ENCODE measurements at regions of chr12 and their contacts with region 1.

Region 1: GRCh38 chr12:45990468-45991283 is at the start of gene SCAF11:
- DNase-seq: peak; percentile 100
- H3K4me3 ChIP-seq: peak within 1 kb of the TSS; percentile 56 to 91 (median 86)
- H3K27ac ChIP-seq: peak within 1 kb of the TSS; percentile 79
- H3K4me1 ChIP-seq: peaks cover 16% of the 10 kb centered on the region
- H3K27me3 ChIP-seq: no peaks in the 10 kb centered on the region
- CTCF ChIP-seq: peak; percentile 96 to 99
- POLR2A ChIP-seq: peak; percentile 16
- total RNA-seq, gene SCAF11: 95.0 and 109 TPM in 2 replicates

Region 2: GRCh38 chr12:45130881-45131281 is 859.8 kb before region 1 on chr12:
- CTCF ChIA-PET with region 1: no interaction called
- POLR2A ChIA-PET with region 1: no interaction called
- dilution Hi-C with region 1: no loop called
- intact Hi-C with region 1: loop called (anchors 5 kb)
- DNase-seq: peak; percentile 71
- H3K4me3 ChIP-seq: no peak overlapping the region
- H3K27ac ChIP-seq: no peak overlapping the region
- H3K4me1 ChIP-seq: no peaks in the 10 kb centered on the region
- H3K27me3 ChIP-seq: peaks cover 5 to 22% of the 10 kb centered on the region in 2 experiments
- CTCF ChIP-seq: peak; percentile 52 to 61
- POLR2A ChIP-seq: no peak

Region 3: GRCh38 chr12:45762185-45763110 is 228.2 kb before region 1 on chr12:
- CTCF ChIA-PET with region 1: interaction called, 18 read pairs
- POLR2A ChIA-PET with region 1: no interaction called
- dilution Hi-C with region 1: no loop called
- intact Hi-C with region 1: loop called (anchors 5 kb)
- DNase-seq: peak; percentile 70
- H3K4me3 ChIP-seq: no peak overlapping the region
- H3K27ac ChIP-seq: no peak overlapping the region
- H3K4me1 ChIP-seq: no peaks in the 10 kb centered on the region
- H3K27me3 ChIP-seq: no peaks in the 10 kb centered on the region
- CTCF ChIP-seq: peak; percentile 47 to 56
- POLR2A ChIP-seq: no peak

Region 4: DNA sequence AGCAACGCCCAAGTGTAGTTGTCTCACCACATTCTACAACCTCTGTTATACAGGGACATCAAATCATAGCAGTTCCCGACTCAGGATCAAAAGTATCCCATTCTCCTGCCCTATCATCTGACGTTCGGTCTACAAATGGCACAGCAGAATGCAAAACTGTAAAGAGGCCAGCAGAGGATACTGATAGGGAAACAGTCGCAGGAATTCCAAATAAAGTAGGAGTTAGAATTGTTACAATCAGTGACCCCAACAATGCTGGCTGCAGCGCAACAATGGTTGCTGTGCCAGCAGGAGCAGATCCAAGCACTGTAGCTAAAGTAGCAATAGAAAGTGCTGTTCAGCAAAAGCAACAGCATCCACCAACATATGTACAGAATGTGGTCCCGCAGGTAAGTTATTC is 138.2 kb before region 1 on chr12:
- CTCF ChIA-PET with region 1: no interaction called
- POLR2A ChIA-PET with region 1: no interaction called
- dilution Hi-C with region 1: no loop called
- intact Hi-C with region 1: no loop called
- DNase-seq: no peak
- H3K4me3 ChIP-seq: no peak overlapping the region
- H3K27ac ChIP-seq: no peak overlapping the region
- H3K4me1 ChIP-seq: no peaks in the 10 kb centered on the region
- H3K27me3 ChIP-seq: no peaks in the 10 kb centered on the region
- CTCF ChIP-seq: no peak
- POLR2A ChIP-seq: no peak

Region 5: GRCh38 chr12:45973526-45973925 is 17.1 kb before region 1 on chr12:
- CTCF ChIA-PET with region 1: interaction called, 4 read pairs
- POLR2A ChIA-PET with region 1: no interaction called
- dilution Hi-C with region 1: no loop called
- intact Hi-C with region 1: loop called (anchors 2 kb)
- DNase-seq: peak; percentile 80
- H3K4me3 ChIP-seq: no peak overlapping the region
- H3K27ac ChIP-seq: peak overlapping the region; percentile 15
- H3K4me1 ChIP-seq: peaks cover 11% of the 10 kb centered on the region
- H3K27me3 ChIP-seq: no peaks in the 10 kb centered on the region
- CTCF ChIP-seq: no peak
- POLR2A ChIP-seq: no peak

Region 6: GRCh38 chr12:46027172-46027571 is 36.5 kb after region 1 on chr12:
- CTCF ChIA-PET with region 1: no interaction called
- POLR2A ChIA-PET with region 1: no interaction called
- dilution Hi-C with region 1: no loop called
- intact Hi-C with region 1: no loop called
- DNase-seq: no peak
- H3K4me3 ChIP-seq: no peak overlapping the region
- H3K27ac ChIP-seq: no peak overlapping the region
- H3K4me1 ChIP-seq: no peaks in the 10 kb centered on the region
- H3K27me3 ChIP-seq: peaks cover 6 to 12% of the 10 kb centered on the region in 2 experiments
- CTCF ChIP-seq: no peak
- POLR2A ChIP-seq: no peak

Region 7: GRCh38 chr12:46268590-46269558 is 278.2 kb after region 1 on chr12 and contains the start of gene SLC38A1:
- CTCF ChIA-PET with region 1: no interaction called
- POLR2A ChIA-PET with region 1: no interaction called
- dilution Hi-C with region 1: no loop called
- intact Hi-C with region 1: loop called (anchors 2 kb)
- DNase-seq: peak; percentile 73
- H3K4me3 ChIP-seq: peak within 1 kb of the TSS; percentile 59 to 85 (median 84)
- H3K27ac ChIP-seq: peak within 1 kb of the TSS; percentile 82
- H3K4me1 ChIP-seq: peaks cover 31% of the 10 kb centered on the region
- H3K27me3 ChIP-seq: no peaks in the 10 kb centered on the region
- CTCF ChIP-seq: no peak
- POLR2A ChIP-seq: peak; percentile 66
- total RNA-seq, gene SLC38A1: 81.0 and 86.4 TPM in 2 replicates

Region 8: DNA sequence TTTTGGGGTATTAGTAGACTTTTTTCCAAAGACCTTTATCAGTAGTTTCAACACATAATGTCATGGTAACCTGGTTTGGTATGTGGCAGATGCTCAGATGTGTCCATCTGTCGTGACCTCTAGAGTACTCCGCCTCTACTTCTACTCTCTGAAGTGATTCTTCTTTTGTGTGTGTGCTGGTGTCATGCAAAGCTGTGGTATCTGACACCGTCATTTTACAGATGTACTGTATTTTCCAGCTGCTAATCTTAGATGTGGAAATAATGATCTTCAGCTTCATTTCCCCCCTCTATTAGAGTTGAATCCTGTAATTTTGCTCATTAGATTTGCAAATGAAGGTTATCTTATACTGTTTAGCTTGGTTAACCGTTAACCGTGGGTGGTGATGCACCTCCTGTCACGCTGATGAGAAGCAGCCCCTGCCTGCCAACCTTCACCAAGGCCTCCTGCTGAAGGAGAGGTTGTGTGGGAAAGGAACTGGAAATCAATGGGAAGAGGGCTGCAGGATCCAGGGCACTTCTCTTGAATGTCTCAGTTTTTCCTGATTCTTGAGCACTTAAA is 1311.5 kb after region 1 on chr12:
- CTCF ChIA-PET with region 1: no interaction called
- POLR2A ChIA-PET with region 1: no interaction called
- dilution Hi-C with region 1: no loop called
- intact Hi-C with region 1: no loop called
- DNase-seq: no peak
- H3K4me3 ChIP-seq: no peak overlapping the region
- H3K27ac ChIP-seq: no peak overlapping the region
- H3K4me1 ChIP-seq: no peaks in the 10 kb centered on the region
- H3K27me3 ChIP-seq: no peaks in the 10 kb centered on the region
- CTCF ChIP-seq: no peak
- POLR2A ChIP-seq: no peak